Calu3 (cell line): ENCODE measurements at regions of chr7 and their contacts with region 1.

Region 1: DNA sequence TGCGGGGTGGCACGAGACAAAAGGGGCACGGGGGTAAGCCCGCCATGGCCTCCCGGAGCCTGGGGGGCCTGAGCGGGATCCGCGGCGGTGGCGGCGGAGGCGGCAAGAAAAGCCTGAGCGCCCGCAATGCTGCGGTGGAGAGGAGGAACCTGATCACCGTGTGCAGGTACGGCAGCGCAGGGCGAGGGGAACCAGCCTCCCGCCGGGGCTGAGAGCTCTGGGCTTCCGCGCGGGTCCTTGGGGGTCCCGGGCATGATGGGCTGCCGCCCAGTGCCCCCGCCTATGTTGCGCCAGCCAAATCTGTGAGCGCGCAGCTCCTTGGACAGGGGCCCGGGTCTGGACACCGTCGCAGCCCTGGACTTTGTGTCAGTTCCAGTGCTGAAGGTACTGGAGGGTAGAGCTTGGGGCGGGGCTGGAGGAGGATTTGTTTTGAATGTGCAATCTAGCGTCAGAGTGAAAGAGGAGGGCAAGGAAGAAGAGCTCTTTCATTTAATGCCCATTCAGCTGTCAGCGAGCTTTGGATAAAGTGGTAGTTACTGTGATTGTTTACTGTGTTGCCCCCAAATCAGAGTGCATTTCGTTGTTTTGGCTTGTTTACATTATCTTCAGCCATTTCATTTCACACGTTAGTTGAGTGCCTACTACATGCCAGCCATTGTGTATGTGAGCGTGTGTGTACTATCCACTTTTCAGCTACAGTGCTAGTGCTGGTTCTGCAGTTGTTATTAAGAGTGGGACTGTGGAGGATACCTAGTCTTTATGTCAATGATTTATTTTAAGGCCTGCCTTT is 777 bp downstream of the RUNDC3B start:
- DNase-seq: peak; percentile 32
- H3K4me3 Mint-ChIP-seq: peak overlapping the region; percentile 89
- H3K27ac Mint-ChIP-seq: no peak overlapping the region
- H3K4me1 Mint-ChIP-seq: no peaks in the 10 kb centered on the region
- H3K27me3 Mint-ChIP-seq: no peaks in the 10 kb centered on the region
- CTCF ChIP-seq: no peak

Region 2: DNA sequence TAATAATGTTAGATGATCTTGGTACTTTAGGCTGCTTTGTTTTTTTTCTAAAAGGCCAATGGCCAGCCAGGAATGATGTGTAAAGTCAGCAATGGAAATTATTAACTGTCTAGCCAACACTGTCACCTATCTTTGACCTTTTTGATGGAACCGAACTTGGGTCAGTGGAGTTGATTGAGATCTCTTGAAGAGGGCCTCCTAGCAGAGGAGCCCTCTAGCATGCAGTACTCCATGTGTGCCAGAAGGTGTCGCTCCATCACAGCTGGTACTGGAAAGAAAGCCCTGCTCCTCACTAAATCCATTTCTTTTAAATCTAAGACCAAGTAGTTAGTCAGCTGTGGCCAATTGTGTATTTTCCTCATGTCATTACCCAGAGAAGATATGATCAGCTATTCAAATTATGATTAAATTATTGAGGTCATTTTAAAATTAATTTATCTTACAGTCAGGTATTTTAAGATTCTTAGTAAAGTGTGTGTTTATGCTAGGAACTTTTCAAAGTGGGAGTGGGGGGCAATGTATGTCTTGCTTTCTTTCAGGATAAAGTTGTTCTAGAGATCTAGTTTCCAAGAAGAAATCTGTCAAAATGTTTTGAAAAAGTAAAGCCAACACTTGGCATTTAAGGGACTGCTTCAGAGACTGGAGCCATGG is 316.6 kb before region 1 on chr7:
- CTCF ChIA-PET with region 1: no interaction called
- intact Hi-C with region 1: loop called (anchors 10 kb)
- DNase-seq: peak; percentile 54
- H3K4me3 Mint-ChIP-seq: no peak overlapping the region
- H3K27ac Mint-ChIP-seq: no peak overlapping the region
- H3K4me1 Mint-ChIP-seq: peaks cover 6% of the 10 kb centered on the region
- H3K27me3 Mint-ChIP-seq: peaks cover 7% of the 10 kb centered on the region
- CTCF ChIP-seq: peak; percentile 38

Region 3: DNA sequence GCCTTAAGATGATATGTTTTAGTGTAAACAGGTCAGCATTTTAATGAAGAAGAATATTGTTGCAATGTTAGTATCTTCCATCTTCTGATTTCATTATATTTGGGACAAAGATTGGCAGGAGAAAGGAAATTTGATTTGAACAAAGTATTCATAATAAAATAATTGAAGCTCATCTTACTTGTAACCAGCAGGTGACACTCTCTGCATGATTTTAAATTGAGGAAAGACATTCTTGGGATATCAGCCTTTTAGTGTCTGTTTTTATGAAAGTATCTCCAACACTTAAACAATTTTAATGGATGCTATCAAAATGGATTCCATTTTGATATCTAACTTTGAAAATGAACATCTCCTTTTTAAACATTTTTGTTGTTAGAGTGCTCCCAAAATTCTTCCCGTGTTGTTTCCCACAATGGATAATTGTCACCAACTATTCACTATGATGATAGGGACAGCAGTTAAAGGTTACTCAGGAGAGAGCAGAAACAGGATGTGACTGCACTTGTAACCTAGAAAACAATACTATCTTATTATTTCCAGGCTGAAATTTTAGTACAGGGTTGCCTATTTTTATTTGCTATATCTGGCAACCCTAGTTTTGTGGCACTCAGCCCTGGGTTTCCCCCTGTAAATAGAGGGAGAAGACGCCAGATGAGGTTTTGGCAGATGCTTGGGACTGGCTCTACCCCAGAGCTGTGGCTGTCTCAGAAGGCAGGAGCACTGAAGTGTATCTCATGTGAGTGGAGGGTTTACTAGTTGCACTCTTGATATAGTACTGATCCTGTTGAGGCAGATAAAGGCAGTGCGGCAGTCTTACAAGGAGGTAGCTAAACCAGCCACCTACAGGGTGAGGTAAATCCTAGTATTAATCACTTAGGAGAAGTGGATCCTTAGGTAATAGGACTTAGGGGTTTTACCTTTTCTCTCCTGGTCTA is 122.5 kb before region 1 on chr7:
- CTCF ChIA-PET with region 1: interaction called, 4 read pairs
- intact Hi-C with region 1: loop called (anchors 1 kb)
- DNase-seq: no peak
- H3K4me3 Mint-ChIP-seq: no peak overlapping the region
- H3K27ac Mint-ChIP-seq: no peak overlapping the region
- H3K4me1 Mint-ChIP-seq: no peaks in the 10 kb centered on the region
- H3K27me3 Mint-ChIP-seq: no peaks in the 10 kb centered on the region
- CTCF ChIP-seq: peak; percentile 19

Region 4: DNA sequence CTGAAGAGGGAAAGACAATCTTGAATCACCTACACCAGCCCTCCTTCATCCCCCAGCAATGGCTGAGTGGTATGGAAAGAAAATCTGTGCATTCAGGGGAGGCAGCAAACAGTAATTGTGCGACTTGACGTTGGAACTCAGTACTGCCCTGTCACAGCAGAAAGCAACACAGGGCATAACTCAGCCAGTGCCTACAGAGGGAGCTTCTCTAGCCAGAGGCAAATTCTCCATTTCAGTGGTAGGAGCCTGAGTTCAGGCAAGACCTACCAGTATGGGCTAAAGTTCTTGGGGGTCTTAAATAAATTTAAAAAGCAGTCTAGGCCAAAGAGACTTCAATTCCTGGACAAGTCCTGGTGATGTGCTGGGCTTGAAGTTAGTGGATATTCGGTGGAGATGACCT is 100.4 kb after region 1 on chr7:
- CTCF ChIA-PET with region 1: no interaction called
- intact Hi-C with region 1: no loop called
- DNase-seq: no peak
- H3K4me3 Mint-ChIP-seq: no peak overlapping the region
- H3K27ac Mint-ChIP-seq: no peak overlapping the region
- H3K4me1 Mint-ChIP-seq: peaks cover 7% of the 10 kb centered on the region
- H3K27me3 Mint-ChIP-seq: no peaks in the 10 kb centered on the region
- CTCF ChIP-seq: no peak